ENCODE measurements at regions of chr12 and their contacts with region 1.

Region 1: DNA sequence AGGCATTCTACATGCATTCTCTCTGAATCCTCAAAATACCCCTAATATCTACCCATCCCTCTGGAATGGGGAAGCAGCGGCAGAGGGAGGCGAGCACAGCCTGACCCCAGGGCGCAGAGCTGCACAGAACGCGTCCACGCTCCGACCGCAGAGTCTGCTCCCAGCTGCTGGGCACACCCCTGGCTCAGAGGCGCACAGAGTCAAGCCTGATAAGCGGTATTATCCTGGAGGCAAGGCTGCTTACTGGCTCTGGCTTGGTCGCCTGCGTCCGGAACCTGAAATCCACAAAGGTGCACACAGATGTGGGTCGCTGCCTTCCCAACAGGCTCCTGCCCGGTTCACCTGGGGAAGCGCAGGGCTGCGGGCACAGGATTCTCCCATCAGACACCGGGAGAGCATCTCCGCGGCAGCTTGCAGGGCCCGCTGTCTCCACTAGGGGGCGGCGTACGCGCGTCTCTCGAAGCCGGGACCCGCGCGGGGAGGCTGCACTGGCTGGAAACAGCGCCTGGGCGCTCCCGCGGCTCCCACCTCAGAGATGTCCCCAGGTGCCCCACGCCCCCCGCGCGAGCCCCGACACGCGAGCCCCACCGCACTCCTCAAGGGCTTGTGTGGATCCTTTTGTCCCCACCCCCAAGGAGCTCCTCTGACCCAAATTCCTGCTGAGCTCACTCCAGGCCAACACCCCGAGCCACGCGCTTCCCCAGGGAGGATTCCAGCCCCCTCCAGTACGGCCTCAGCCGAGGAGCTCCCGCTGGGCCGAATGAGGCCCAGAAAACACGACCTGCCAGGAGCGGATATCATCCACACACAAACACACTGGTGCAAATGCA is 120.1 kb upstream of the FZD10 start:
- DNase-seq: peak; percentile 83
- ATAC-seq: peak; percentile 69
- H3K4me3 Mint-ChIP-seq: no peak overlapping the region
- H3K27ac Mint-ChIP-seq: no peak overlapping the region
- H3K4me1 Mint-ChIP-seq: no peaks in the 10 kb centered on the region
- H3K27me3 Mint-ChIP-seq: peaks cover 43% of the 10 kb centered on the region

Region 2: DNA sequence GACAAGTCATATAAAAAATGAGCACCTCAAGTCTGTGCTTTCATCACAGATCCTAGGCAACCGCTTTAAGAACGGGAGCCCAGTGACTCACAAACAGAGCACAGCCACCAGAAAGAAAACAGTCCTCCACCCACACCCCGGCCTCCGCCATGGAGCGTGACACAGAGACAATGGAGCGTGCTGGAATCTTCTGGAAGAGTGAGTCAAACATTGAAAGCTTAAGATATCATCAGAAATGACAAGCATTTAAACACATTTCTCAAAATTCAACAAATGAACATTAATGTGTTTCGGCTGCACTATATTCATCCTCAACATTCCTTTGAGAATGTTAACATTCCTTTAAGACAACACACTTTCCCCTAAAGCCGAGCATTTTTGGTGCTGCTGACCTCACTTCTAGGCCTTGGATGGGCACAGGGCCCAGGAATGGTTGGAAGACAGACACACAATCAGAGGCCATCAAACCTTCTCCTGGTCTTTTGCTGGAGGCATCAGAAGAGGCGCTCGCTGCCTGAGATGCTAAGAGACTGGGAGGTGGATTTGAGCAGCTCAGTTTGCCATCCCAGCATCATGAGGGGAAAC is 114.8 kb before region 1 on chr12:
- CTCF ChIA-PET with region 1: no interaction called
- POLR2A ChIA-PET with region 1: no interaction called
- intact Hi-C with region 1: no loop called
- DNase-seq: no peak
- ATAC-seq: no peak
- H3K4me3 Mint-ChIP-seq: no peak overlapping the region
- H3K27ac Mint-ChIP-seq: no peak overlapping the region
- H3K4me1 Mint-ChIP-seq: no peaks in the 10 kb centered on the region
- H3K27me3 Mint-ChIP-seq: peaks cover 4% of the 10 kb centered on the region

Region 3: DNA sequence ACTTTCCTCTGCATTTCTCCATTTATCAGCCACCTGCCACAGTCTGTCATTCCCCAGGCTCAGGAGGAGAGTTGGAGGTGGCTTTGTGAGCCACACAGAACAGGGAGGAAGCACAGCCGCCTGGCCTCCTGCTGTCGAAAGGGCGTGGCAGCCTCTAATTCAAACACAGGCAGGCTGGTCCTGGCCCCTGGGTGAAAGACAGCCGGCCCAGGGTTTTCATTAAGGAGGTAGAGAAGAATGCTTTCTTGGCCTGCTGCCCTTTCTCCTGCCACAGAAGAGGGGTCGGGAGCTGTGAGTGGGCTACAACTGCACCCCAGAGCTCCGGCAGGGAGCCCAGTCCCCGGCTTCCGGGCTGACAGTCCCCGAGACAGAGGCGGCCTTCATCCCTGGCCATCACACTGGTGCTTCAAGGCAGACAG is 11.5 kb after region 1 on chr12:
- CTCF ChIA-PET with region 1: no interaction called
- POLR2A ChIA-PET with region 1: no interaction called
- intact Hi-C with region 1: no loop called
- DNase-seq: no peak
- ATAC-seq: no peak
- H3K4me3 Mint-ChIP-seq: no peak overlapping the region
- H3K27ac Mint-ChIP-seq: no peak overlapping the region
- H3K4me1 Mint-ChIP-seq: no peaks in the 10 kb centered on the region
- H3K27me3 Mint-ChIP-seq: peaks cover 18% of the 10 kb centered on the region

Region 4: GRCh38 chr12:130162267-130162666 is 120.1 kb after region 1 on chr12 and contains the start of gene FZD10:
- CTCF ChIA-PET with region 1: no interaction called
- POLR2A ChIA-PET with region 1: no interaction called
- intact Hi-C with region 1: loop called (anchors 10 kb)
- DNase-seq: peak; percentile 62
- ATAC-seq: peak; percentile 47
- H3K4me3 Mint-ChIP-seq: peak within 1 kb of the TSS; percentile 40
- H3K27ac Mint-ChIP-seq: no peak within 1 kb of the TSS
- H3K4me1 Mint-ChIP-seq: peaks cover 4% of the 10 kb centered on the region
- H3K27me3 Mint-ChIP-seq: peaks cover 39% of the 10 kb centered on the region
- total RNA-seq, gene FZD10: not detected

Region 5: DNA sequence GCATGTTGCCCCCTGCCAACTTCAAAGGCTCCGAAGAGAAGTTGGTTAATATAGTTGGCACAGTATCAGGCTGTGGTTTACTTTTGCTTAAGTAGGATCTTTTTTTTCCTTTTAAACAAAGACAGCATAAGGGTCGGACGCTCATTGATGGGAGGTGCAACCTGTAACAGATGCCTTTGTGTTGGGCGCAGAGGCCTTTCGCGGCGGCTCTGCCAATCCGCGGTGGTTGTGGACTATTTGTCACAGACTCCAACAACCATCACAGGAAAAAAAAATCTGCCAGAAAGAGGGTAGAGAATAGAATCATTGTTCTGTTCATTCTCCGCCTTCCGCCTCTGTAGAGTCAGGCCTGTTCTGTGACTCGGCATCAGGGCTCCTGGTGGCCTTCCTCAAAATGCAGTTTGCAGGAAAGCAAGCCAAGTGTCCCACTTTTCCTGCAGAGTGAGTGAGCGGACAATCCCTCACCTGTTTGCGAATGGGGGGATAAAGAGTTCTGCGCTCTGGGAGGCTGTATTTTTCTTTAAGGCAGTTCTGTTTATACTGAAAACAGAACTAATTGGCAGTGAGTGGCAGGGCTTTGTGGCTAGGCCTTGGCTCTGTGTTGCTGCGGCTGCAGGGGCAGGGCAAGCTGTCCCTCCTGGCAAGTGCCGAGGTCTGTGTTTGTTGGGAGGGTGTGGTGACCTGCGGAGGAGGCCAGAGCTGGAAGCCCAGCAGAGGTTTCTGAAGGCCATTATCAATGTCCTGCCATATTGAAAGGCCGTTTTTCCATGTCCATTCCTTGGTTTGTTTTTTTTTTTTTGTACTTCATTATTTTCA is 212.5 kb after region 1 on chr12:
- CTCF ChIA-PET with region 1: no interaction called
- POLR2A ChIA-PET with region 1: no interaction called
- intact Hi-C with region 1: no loop called
- DNase-seq: no peak
- ATAC-seq: no peak
- H3K4me3 Mint-ChIP-seq: no peak overlapping the region
- H3K27ac Mint-ChIP-seq: no peak overlapping the region
- H3K4me1 Mint-ChIP-seq: no peaks in the 10 kb centered on the region
- H3K27me3 Mint-ChIP-seq: peaks cover 7% of the 10 kb centered on the region

Region 6: GRCh38 chr12:130281153-130281799 is 239.1 kb after region 1 on chr12:
- CTCF ChIA-PET with region 1: interaction called, 3 read pairs
- POLR2A ChIA-PET with region 1: no interaction called
- intact Hi-C with region 1: loop called in 1 of 2 experiments (anchors 2 kb)
- DNase-seq: peak; percentile 77
- ATAC-seq: peak; percentile 77
- H3K4me3 Mint-ChIP-seq: peak overlapping the region; percentile 54
- H3K27ac Mint-ChIP-seq: no peak overlapping the region
- H3K4me1 Mint-ChIP-seq: peaks cover 5% of the 10 kb centered on the region
- H3K27me3 Mint-ChIP-seq: peaks cover 3% of the 10 kb centered on the region

Region 7: DNA sequence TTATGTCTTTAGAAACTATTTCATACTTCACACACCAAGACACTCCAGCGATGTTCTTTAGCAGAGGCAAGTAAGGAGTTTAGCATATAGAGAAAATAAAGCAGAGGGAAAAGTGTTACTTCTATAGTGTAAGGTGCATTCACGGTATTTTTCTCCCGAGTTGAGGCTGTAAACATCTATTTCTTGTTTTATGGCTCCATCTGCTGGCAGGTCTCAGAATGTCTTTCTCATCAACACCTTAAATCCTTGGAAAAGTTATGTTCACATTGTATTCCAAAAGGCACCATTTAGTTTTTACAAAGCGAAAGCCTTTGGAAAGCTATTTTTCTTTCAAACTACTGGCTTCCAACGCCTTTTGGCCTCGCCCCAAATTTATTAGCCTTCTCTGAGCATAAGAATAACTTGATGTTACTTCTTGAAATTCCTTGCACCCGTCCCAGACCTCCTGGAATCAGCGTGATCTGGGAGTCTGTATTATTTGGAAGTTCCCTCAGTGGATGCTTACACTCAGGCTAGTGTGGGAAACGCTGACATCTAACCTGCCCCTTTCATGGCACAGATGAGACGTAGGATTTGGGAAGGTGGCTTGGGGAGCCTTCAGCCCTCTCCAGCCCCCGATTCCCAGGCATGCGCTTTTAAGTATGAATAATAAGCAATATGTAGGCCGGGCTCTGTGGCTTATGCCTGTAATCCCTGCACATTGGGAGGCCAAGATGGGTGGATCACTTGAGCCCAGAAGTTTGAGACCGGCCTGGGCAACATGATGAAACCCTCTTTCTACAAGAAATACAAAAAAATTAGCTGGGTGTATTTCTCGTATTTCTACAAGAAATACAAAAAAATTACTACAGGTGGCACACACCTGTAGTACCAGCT is 293.6 kb after region 1 on chr12:
- CTCF ChIA-PET with region 1: interaction called, 5 read pairs
- POLR2A ChIA-PET with region 1: no interaction called
- intact Hi-C with region 1: loop called (anchors 1 kb)
- DNase-seq: peak; percentile 47
- ATAC-seq: peak; percentile 30
- H3K4me3 Mint-ChIP-seq: no peak overlapping the region
- H3K27ac Mint-ChIP-seq: no peak overlapping the region
- H3K4me1 Mint-ChIP-seq: no peaks in the 10 kb centered on the region
- H3K27me3 Mint-ChIP-seq: peaks cover 23% of the 10 kb centered on the region

Measured in activated CD4-positive, alpha-beta T cell treated with anti-CD3 and anti-CD28 coated beads for 36 hours (primary cell).